Breast epithelium (tissue), 4 donors: ENCODE measurements at regions of chr20 and their contacts with region 1.

Region 1: DNA sequence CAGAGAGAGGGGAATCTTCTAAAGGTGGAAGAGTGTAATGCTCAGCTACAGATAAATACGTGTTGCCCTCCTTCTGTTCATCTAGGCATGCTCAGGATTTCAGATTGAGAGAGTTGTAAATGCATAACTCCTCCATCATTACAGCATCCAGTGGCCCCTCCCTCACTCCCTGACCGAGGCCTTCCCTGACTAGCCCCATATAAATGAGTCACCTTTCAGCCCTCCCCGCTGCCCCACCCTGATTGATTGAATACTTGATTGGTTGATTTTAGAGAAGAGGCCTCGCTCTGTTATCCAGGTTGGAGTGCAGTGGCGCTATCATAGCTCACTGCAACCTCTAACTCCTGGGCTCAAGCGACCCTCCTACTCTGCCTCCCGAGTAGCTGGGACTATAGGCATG is 193.7 kb downstream of the EYA2 start:
- DNase-seq: no peak
- H3K4me3 ChIP-seq: no peak overlapping the region
- H3K27ac ChIP-seq: no peak overlapping the region
- H3K4me1 ChIP-seq: no peaks in the 10 kb centered on the region
- H3K27me3 ChIP-seq: no peaks in the 10 kb centered on the region
- CTCF ChIP-seq: no peak
- POLR2A ChIP-seq: no peak

Region 2: DNA sequence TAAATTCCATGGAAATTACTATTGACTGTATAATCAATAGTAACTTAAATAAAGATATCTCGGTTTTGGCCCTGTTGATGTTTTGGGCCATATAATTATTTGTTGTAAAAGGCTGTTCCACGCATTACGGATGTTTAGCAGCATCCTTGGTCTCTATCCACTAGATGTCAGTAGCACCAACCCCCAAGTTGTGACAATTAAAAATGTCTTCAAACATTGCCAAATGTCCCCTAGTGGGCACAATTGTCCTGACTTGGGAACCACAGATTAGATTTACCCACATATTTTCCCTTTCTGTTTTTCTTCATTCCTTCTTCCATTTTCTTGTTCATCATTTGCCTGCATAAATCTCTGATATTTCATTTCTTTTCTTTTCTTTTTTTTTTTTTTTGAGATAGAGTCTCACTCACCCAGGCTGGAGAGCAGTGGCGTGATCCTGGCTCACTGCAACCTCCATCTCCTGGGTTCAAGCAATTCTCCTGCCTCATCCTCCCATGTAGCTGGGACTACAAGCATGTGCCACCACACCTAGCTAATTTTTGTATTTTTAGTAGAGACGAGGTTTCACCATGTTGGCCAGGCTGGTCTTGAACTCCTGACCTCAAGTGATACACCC is 1495.7 kb before region 1 on chr20:
- intact Hi-C with region 1: no loop called
- DNase-seq: no peak
- H3K4me3 ChIP-seq: no peak overlapping the region
- H3K27ac ChIP-seq: no peak overlapping the region
- H3K4me1 ChIP-seq: no peaks in the 10 kb centered on the region
- H3K27me3 ChIP-seq: no peaks in the 10 kb centered on the region
- CTCF ChIP-seq: peak in 2 of 3 donors; percentile 29 to 38
- POLR2A ChIP-seq: no peak

Region 3: GRCh38 chr20:46835418-46835817 is 252.9 kb before region 1 on chr20:
- intact Hi-C with region 1: no loop called
- DNase-seq: no peak
- H3K4me3 ChIP-seq: no peak overlapping the region
- H3K27ac ChIP-seq: no peak overlapping the region
- H3K4me1 ChIP-seq: no peaks in the 10 kb centered on the region
- H3K27me3 ChIP-seq: no peaks in the 10 kb centered on the region
- CTCF ChIP-seq: no peak
- POLR2A ChIP-seq: no peak

Region 4: DNA sequence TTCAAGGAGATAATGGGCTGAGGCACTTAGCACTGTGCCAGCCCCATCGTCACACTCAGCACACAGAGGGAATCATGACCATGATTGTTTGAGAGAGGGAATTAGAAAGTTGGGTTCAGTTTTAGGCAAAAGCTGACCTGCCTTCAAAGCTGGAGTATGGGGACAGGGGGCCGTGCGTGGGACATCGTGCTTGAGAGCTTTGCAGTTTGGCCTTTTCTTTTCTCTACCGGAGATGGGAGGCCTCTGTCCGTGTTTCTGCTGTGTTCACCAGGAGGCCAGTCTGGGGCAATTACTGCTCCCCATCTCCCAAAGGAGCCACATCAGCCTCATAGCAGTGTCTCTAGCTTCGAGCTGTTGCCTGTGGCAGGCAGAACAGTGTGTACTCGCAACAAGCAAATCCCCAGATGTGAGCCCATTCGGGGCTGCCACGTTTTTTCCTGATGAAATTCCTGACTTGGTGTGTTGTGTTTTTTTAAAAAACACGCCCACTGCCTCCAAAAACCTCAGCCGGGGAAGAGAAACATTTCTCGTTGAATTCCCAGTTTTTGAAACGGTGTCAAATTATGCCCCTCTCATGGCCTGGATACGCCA is 173.5 kb before region 1 on chr20:
- intact Hi-C with region 1: loop called (anchors 5 kb)
- DNase-seq: no peak
- H3K4me3 ChIP-seq: no peak overlapping the region
- H3K27ac ChIP-seq: peak overlapping the region in 1 of 2 donors; percentile 54
- H3K4me1 ChIP-seq: peaks cover 0 to 3% of the 10 kb centered on the region in 2 donors
- H3K27me3 ChIP-seq: no peaks in the 10 kb centered on the region
- CTCF ChIP-seq: no peak
- POLR2A ChIP-seq: no peak